Endothelial cell of umbilical vein (primary cell): ENCODE measurements at regions of chr6 and their contacts with region 1.

Region 1: GRCh38 chr6:163338671-163339405 is 75.7 kb upstream of the QKI start:
- DNase-seq: peak; percentile 57
- H3K4me3 ChIP-seq: no peak overlapping the region
- H3K27ac ChIP-seq: no peak overlapping the region
- H3K4me1 ChIP-seq: peaks cover 23% of the 10 kb centered on the region
- H3K27me3 ChIP-seq: no peaks in the 10 kb centered on the region
- CTCF ChIP-seq: no peak
- POLR2A ChIP-seq: no peak

Region 2: DNA sequence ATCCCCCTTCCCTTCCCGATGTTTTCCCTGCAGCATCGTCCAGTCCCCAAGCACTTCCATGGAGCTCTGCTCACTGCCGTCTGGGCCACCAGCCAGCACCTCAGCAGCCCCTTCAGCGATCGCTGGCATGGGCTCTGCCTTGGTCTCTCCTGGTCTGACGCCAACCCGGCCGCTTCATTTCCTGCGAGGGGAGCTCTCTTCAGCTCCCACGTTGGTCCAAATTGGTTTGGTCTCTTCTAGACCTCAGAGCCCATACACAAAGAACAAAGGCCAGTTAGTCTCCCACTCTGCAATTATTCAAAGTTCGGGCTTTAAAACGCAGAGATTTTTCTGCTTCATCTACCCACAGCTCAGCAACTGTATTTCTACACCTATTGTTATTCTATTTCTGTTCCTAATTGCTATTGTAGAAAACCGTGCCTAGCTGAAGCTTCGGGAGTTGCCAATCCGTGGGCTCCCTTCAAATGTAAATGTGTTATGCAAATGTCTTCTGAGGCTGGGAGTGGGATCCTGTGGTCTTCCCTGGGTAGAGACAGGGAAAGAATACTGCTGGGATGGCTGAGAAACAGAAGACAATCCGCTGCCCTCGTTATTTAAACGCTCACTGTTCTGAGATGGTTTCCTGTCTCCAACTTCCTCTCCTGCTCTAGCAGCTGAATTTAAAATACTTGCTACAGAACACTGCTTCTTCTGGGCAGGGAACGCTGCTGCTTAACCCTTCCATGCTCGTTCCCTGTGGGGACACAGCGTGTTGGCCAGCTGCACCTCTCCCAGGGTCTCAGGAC is 78.5 kb before region 1 on chr6:
- CTCF ChIA-PET with region 1: no interaction called
- POLR2A ChIA-PET with region 1: no interaction called
- dilution Hi-C with region 1: no loop called
- intact Hi-C with region 1: loop called (anchors 1 kb)
- DNase-seq: peak; percentile 48
- H3K4me3 ChIP-seq: peak overlapping the region in 2 of 3 experiments; percentile 21 to 38
- H3K27ac ChIP-seq: no peak overlapping the region
- H3K4me1 ChIP-seq: peaks cover 9% of the 10 kb centered on the region
- H3K27me3 ChIP-seq: no peaks in the 10 kb centered on the region
- CTCF ChIP-seq: no peak
- POLR2A ChIP-seq: no peak

Region 3: GRCh38 chr6:163291622-163292021 is 47.2 kb before region 1 on chr6:
- CTCF ChIA-PET with region 1: interaction called, 6 read pairs
- POLR2A ChIA-PET with region 1: no interaction called
- dilution Hi-C with region 1: no loop called
- intact Hi-C with region 1: loop called (anchors 1 kb)
- DNase-seq: peak; percentile 67
- H3K4me3 ChIP-seq: no peak overlapping the region
- H3K27ac ChIP-seq: peak overlapping the region; percentile 25
- H3K4me1 ChIP-seq: peaks cover 10% of the 10 kb centered on the region
- H3K27me3 ChIP-seq: no peaks in the 10 kb centered on the region
- CTCF ChIP-seq: no peak
- POLR2A ChIP-seq: no peak

Region 4: GRCh38 chr6:163348789-163349680 is 10.2 kb after region 1 on chr6:
- CTCF ChIA-PET with region 1: interaction called, 22 read pairs
- POLR2A ChIA-PET with region 1: no interaction called
- dilution Hi-C with region 1: no loop called
- intact Hi-C with region 1: loop called (anchors 1 kb)
- DNase-seq: no peak
- H3K4me3 ChIP-seq: no peak overlapping the region
- H3K27ac ChIP-seq: no peak overlapping the region
- H3K4me1 ChIP-seq: peaks cover 14% of the 10 kb centered on the region
- H3K27me3 ChIP-seq: no peaks in the 10 kb centered on the region
- CTCF ChIP-seq: no peak
- POLR2A ChIP-seq: no peak

Region 5: DNA sequence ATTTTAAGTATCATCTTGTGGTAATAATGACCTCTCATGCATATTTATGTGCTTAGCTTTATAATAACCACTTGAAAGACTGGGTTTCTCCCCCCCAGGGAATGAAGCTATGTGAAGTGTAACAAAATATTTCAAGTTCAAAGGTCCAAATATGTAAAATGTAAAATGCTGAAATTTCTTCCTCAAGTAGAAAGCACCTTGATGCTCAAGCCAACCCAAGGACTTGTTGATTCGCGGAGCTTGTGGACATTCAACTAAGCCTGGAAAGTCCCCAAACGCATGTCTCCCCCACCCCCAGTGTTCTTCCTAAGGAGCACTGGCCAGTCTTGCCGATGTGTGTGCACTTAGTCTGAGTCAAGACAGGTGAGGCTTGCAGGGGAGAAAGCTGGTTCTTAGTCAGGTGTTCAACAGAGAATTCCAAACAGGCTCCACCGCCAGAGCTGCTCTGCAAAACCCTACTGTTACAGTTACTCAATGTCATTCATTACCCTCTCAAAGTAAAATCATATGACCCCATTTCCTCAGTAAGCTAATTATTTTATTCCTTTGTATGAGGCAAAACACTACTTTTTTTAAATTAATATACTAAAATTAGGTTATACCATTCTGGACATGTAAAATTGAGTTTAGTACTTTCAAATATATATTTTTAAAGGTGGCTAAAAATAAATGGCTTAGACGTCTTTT is 28.8 kb after region 1 on chr6:
- CTCF ChIA-PET with region 1: interaction called, 4 read pairs
- POLR2A ChIA-PET with region 1: interaction called, 3 read pairs
- dilution Hi-C with region 1: no loop called
- intact Hi-C with region 1: loop called (anchors 1 kb)
- DNase-seq: peak; percentile 52
- H3K4me3 ChIP-seq: no peak overlapping the region
- H3K27ac ChIP-seq: peak overlapping the region; percentile 46
- H3K4me1 ChIP-seq: peaks cover 15% of the 10 kb centered on the region
- H3K27me3 ChIP-seq: no peaks in the 10 kb centered on the region
- CTCF ChIP-seq: no peak
- POLR2A ChIP-seq: no peak

Region 6: DNA sequence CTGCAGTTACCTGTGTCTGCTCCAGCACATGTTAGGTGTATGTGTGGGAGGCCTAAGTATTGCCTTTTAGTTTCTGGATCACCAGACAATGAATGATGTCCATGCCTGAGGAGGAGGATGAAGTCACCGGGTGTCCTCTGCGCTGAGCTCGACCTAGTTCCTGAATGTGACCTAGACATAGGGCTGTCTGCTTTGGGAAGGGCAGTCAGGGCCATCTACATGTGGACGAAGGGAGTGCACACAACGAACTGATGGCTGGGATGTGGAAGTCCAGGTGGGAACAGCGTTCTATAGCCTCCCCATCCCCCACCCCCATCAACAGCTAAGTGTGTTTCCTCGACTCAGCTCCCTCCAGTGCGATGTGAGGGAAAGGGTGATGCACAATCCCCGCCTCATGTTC is 261.9 kb after region 1 on chr6:
- CTCF ChIA-PET with region 1: no interaction called
- POLR2A ChIA-PET with region 1: no interaction called
- dilution Hi-C with region 1: no loop called
- intact Hi-C with region 1: no loop called
- DNase-seq: no peak
- H3K4me3 ChIP-seq: no peak overlapping the region
- H3K27ac ChIP-seq: no peak overlapping the region
- H3K4me1 ChIP-seq: no peaks in the 10 kb centered on the region
- H3K27me3 ChIP-seq: peaks cover 0 to 12% of the 10 kb centered on the region in 2 experiments
- CTCF ChIP-seq: no peak
- POLR2A ChIP-seq: no peak

Region 7: DNA sequence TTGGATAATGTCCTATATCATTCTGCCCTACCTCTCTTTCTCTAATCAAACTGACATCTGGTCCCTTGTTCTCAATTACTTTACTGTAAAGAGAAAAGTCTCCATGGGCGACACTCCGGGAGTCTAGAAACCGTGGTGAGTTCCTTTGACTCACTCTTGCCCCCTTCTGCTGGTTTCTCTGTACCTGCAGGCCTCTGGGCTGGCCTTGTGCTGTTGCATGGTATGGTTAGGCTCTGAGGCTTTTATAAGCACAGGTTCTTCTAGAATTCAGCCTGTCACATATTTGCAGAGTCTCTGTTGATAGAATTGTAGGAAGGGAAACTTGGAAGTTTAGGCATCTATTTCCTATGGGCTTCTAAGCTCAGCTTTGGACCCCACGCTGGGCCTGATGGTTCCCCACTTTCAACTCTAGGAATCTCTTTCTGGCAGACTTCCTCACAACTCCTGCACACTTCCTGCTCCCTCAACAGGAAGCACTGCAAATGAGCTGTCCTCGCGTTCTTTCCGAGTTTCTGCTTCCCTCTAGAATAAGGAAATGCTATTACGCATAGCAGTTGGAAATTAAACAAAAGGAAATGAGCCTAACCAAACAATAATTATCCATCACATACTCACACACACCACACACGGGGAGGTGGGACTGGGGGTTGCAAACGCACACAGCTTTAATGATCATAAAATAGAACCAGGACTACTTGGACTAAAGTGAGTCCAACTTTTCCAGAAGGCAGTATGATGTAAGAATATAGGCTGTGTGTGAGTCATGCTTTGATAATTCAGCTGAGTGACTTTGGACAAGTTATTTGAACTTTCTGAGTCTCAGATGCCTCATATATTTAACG is 758.9 kb after region 1 on chr6:
- CTCF ChIA-PET with region 1: no interaction called
- POLR2A ChIA-PET with region 1: no interaction called
- dilution Hi-C with region 1: no loop called
- intact Hi-C with region 1: loop called (anchors 1 kb)
- DNase-seq: peak; percentile 94
- H3K4me3 ChIP-seq: no peak overlapping the region
- H3K27ac ChIP-seq: peak overlapping the region; percentile 59
- H3K4me1 ChIP-seq: peaks cover 23% of the 10 kb centered on the region
- H3K27me3 ChIP-seq: no peaks in the 10 kb centered on the region
- CTCF ChIP-seq: peak; percentile 22 to 51
- POLR2A ChIP-seq: no peak